CD8-positive, alpha-beta memory T cell (primary cell): ENCODE measurements at regions of chr17 and their contacts with region 1.

Region 1: DNA sequence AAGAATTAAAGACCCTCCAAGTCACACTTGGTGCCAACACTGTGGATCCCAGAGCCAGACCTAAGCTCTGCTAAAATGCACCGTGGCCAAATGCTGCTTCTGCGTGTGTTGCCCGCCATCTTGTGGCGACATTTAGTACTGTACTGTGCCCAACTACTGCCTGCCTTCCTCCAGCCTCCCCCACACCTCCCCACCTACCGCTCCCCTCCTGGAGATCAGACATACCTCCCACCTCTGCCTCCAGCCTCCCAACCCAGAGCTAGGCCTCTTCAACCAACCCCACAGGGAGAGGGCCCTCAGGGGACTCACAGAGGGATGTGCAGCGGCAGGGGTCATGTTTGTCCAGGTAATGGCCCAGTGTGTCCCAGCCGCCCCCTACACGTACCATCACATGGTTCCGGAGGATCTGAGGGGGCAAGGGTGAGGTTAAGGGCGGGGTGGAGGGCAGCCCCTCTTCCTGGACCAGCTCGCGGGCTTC is 5.5 kb downstream of the GAS2L2 start:
- DNase-seq: peak; percentile 64 to 83 (median 71)
- H3K4me3 ChIP-seq: no peak overlapping the region
- H3K4me3 Mint-ChIP-seq: no peak overlapping the region
- H3K27ac ChIP-seq: no peak overlapping the region
- H3K27ac Mint-ChIP-seq: peak overlapping the region in 1 of 8 donors; percentile 77
- H3K4me1 ChIP-seq: peaks cover 6% of the 10 kb centered on the region
- H3K4me1 Mint-ChIP-seq: peaks cover 4 to 18% (median 5%) of the 10 kb centered on the region in 3 donors
- H3K27me3 ChIP-seq: peaks cover 40% of the 10 kb centered on the region
- H3K27me3 Mint-ChIP-seq: peaks cover 49 to 58% of the 10 kb centered on the region in 2 donors

Region 2: GRCh38 chr17:35170968-35171771 is 576.4 kb before region 1 on chr17:
- CTCF ChIA-PET with region 1: interaction called, 17 read pairs
- POLR2A ChIA-PET with region 1: no interaction called
- DNase-seq: peak in 3 of 5 donors; percentile 63 to 70 (median 65)
- H3K4me3 ChIP-seq: no peak overlapping the region
- H3K4me3 Mint-ChIP-seq: peak overlapping the region; percentile 22 to 77 (median 74)
- H3K27ac ChIP-seq: no peak overlapping the region
- H3K27ac Mint-ChIP-seq: peak overlapping the region; percentile 63 to 96 (median 88)
- H3K4me1 ChIP-seq: peaks cover 39% of the 10 kb centered on the region
- H3K4me1 Mint-ChIP-seq: peaks cover 41 to 51% (median 47%) of the 10 kb centered on the region in 3 donors
- H3K27me3 ChIP-seq: no peaks in the 10 kb centered on the region
- H3K27me3 Mint-ChIP-seq: no peaks in the 10 kb centered on the region

Region 3: DNA sequence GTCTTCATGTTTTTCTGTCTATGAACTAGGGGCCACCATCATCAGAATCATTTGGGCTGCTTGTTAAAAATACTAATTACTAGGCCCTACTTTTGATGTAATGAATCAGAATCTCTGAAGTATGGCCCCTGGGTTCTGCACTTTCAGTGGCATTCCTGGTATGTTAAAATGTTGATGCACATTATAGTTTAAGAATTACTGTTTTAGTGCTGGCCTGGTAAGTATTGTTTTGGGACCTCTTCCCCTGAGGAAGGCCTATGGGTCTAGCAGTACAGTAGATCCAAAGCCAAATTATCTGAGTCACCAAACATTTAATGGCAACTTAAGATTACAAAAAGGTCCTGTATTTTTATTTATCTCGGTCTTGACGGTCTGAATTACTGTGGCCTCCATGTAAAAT is 101.7 kb before region 1 on chr17:
- CTCF ChIA-PET with region 1: no interaction called
- POLR2A ChIA-PET with region 1: no interaction called
- DNase-seq: no peak
- H3K4me3 ChIP-seq: no peak overlapping the region
- H3K4me3 Mint-ChIP-seq: no peak overlapping the region
- H3K27ac ChIP-seq: no peak overlapping the region
- H3K27ac Mint-ChIP-seq: peak overlapping the region in 2 of 8 donors; percentile 51 to 52
- H3K4me1 ChIP-seq: no peaks in the 10 kb centered on the region
- H3K4me1 Mint-ChIP-seq: peaks cover 0 to 20% (median 6%) of the 10 kb centered on the region in 3 donors
- H3K27me3 ChIP-seq: no peaks in the 10 kb centered on the region
- H3K27me3 Mint-ChIP-seq: no peaks in the 10 kb centered on the region

Region 4: GRCh38 chr17:35841505-35841904 is 93.9 kb after region 1 on chr17:
- CTCF ChIA-PET with region 1: no interaction called
- POLR2A ChIA-PET with region 1: no interaction called
- DNase-seq: no peak
- H3K4me3 ChIP-seq: no peak overlapping the region
- H3K4me3 Mint-ChIP-seq: no peak overlapping the region
- H3K27ac ChIP-seq: no peak overlapping the region
- H3K27ac Mint-ChIP-seq: peak overlapping the region in 1 of 8 donors; percentile 50
- H3K4me1 ChIP-seq: no peaks in the 10 kb centered on the region
- H3K4me1 Mint-ChIP-seq: peaks cover 0 to 5% (median 3%) of the 10 kb centered on the region in 3 donors
- H3K27me3 ChIP-seq: no peaks in the 10 kb centered on the region
- H3K27me3 Mint-ChIP-seq: no peaks in the 10 kb centered on the region